Sigmoid colon (tissue), 7 donors: ENCODE measurements at regions of chr9 and their contacts with region 1.

Region 1: DNA sequence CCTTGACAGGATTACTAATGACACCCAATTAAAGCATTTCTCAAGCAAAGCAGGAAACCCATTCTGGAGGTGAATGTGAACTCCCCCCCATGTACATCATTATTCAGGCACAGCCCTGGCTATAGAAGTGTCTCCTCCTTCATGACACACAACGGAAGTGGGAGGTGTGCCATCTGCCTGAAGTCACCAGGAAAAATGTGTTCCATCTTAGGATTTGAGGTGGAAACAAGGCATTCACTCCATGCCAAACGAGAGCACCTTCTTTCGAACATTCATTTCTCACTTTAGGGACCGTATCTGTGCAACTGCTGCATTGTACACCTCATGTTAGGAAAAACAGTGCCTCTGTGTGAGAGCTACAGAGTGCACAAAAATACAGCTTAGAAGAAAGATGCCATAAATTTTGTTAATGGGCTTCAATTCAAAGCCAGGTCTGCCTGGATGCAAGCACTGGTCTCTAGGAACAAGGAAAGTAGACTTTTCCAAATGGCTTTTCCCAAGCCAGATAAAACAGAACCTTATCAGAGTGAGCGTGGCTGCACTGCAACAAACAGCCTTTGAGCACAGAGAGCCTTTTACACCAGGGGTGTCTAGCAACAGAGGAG is 19.4 kb downstream of the GOLM1 start:
- DNase-seq: no peak
- H3K4me3 ChIP-seq: no peak overlapping the region
- H3K27ac ChIP-seq: peak overlapping the region in 2 of 4 donors; percentile 1 to 49
- H3K4me1 ChIP-seq: peaks cover 0 to 65% (median 57%) of the 10 kb centered on the region in 4 donors
- H3K27me3 ChIP-seq: no peaks in the 10 kb centered on the region
- CTCF ChIP-seq: no peak
- EP300 ChIP-seq: no peak
- POLR2A ChIP-seq: no peak

Region 2: GRCh38 chr9:86044001-86044400 is 36.0 kb before region 1 on chr9:
- intact Hi-C with region 1: loop called (anchors 5 kb)
- DNase-seq: no peak
- H3K4me3 ChIP-seq: no peak overlapping the region
- H3K27ac ChIP-seq: no peak overlapping the region
- H3K4me1 ChIP-seq: peaks cover 0 to 17% (median 13%) of the 10 kb centered on the region in 4 donors
- H3K27me3 ChIP-seq: no peaks in the 10 kb centered on the region
- CTCF ChIP-seq: no peak
- EP300 ChIP-seq: no peak
- POLR2A ChIP-seq: no peak

Region 3: DNA sequence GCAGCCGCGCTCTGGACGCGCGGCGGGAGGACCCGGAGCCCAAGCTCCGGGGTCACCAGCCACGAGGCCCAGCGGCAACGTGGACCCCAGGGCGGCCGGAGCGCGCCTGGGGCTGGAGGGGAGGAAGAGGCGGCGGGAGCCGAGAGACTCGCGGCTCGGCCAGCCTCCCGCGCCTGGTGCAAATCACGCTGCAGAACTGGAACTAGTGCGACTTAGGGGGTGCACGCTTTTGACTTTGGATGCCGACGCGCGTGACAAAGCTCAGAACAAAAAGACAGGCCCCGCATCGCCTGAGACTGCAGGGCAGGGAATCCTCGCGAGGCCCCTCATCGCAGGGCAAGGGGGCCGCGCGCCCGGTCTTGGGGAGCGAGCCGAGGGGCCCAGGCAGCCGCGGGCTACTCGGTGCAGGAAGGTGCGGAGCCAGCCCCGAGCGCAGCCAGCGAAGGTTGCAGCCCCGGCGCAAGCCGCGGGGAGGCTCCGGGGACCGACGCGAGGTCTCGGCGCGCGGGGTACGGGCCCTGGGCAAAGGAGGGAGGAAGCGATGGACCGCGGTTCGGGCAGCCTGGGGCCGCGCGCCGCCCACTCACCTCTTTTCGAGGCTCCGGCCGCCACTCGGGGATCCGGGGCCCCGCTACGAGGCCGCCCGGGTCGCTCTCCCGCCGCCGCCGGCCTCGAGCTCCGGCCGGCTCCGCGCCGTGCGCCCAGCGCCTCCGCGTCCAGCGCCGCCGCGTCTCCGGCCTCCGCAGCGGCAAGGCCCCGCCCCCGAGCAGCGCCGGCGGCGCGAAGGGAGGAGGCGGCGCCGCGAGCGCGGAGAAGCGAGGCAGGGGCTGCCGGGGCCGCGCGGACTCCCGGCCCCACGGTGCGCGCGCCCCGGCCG is 19.1 kb after region 1 on chr9 and contains the start of gene GOLM1:
- intact Hi-C with region 1: loop called (anchors 2 kb)
- DNase-seq: peak; percentile 73
- H3K4me3 ChIP-seq: peak within 1 kb of the TSS; percentile 61 to 88 (median 76)
- H3K27ac ChIP-seq: peak within 1 kb of the TSS; percentile 73 to 81 (median 78)
- H3K4me1 ChIP-seq: peaks cover 0 to 14% (median 8%) of the 10 kb centered on the region in 4 donors
- H3K27me3 ChIP-seq: no peaks in the 10 kb centered on the region
- CTCF ChIP-seq: no peak
- EP300 ChIP-seq: no peak
- POLR2A ChIP-seq: no peak
- total RNA-seq, gene GOLM1: 9.2 to 14.3 (median 13.2) TPM

Region 4: GRCh38 chr9:86141843-86142242 is 61.9 kb after region 1 on chr9:
- intact Hi-C with region 1: no loop called
- DNase-seq: no peak
- H3K4me3 ChIP-seq: no peak overlapping the region
- H3K27ac ChIP-seq: no peak overlapping the region
- H3K4me1 ChIP-seq: no peaks in the 10 kb centered on the region
- H3K27me3 ChIP-seq: no peaks in the 10 kb centered on the region
- CTCF ChIP-seq: no peak
- EP300 ChIP-seq: no peak
- POLR2A ChIP-seq: no peak

Region 5: DNA sequence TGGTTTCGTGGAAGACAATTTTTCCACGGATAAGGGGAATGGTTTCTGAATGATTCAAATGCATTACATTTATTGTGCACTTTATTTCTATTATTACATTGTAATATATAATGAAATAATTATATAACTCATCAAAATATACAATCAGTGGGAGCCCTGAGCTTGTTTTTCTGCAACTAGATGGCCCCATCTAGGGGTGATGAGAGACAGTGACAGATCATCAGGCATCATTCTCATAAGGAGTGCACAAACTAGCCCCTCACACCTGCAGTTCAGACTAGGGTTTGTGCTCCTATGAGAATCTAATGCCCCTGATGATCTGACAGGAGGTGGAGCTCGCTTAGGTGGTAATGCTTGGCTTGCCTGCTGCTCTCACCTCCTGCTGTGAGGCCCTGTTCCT is 196.0 kb after region 1 on chr9:
- intact Hi-C with region 1: loop called (anchors 5 kb)
- DNase-seq: no peak
- H3K4me3 ChIP-seq: no peak overlapping the region
- H3K27ac ChIP-seq: no peak overlapping the region
- H3K4me1 ChIP-seq: peaks cover 0 to 55% (median 39%) of the 10 kb centered on the region in 4 donors
- H3K27me3 ChIP-seq: no peaks in the 10 kb centered on the region
- CTCF ChIP-seq: no peak
- EP300 ChIP-seq: no peak
- POLR2A ChIP-seq: no peak